SK-N-SH (cell line): ENCODE measurements at regions of chr10 and their contacts with region 1.

Region 1: DNA sequence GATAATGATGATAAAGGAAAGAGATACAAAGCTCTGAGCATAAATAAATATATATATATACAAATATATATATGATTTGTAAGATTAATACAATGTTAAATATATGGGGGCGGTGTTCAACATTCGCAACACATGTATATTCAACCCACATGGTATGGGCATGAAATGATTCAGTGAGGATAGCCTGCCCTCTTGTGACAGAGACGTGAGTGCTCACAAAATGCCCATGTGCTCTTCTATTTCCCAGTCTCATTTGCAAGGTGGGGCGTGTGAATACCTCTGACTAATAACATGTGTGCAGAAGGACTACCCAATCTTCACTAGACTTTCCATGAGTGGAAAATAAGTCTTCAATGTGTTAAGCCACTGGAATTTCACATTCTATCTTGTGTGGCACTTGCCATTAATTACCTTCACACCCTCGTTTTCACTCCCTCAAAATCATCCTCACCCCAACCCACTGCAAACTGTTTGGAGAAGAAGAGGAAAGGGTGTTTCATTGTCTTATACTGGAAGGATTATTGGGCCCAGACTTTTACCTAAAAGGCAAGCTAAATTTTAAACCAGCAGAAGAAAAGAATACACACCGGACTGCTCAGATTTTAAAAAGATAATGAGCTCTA is 26.9 kb downstream of the ASAH2 start:
- DNase-seq: peak; percentile 28
- H3K4me3 ChIP-seq: no peak overlapping the region; a peak in 1 of 4 replicates
- H3K27ac ChIP-seq: no peak overlapping the region
- H3K4me1 ChIP-seq: no peaks in the 10 kb centered on the region
- H3K27me3 ChIP-seq: peaks cover 11% of the 10 kb centered on the region; the same call in 1 of the 2 replicates
- CTCF ChIP-seq: peak; percentile 72
- EP300 ChIP-seq: no peak
- RAD21 ChIP-seq: peak; percentile 82

Region 2: DNA sequence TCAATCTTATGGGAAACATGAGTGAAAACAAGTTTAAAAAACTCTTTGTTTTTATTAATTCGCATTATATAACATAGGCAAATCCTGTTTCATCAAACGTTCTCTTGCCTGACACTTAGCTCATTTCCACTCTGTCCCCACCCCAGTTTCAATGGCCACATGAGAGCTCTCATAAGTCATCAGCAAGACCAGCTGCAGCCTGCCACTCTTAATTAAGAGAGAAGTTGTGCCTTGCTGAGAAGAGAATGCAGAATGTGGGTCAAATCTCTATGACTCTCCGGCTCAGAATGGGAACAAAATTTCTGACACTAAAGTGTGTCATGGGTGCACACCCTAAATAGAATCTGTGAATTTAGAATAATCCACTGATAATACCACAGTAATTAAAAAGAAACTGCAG is 12.8 kb before region 1 on chr10:
- CTCF ChIA-PET with region 1: interaction called, 14 read pairs
- POLR2A ChIA-PET with region 1: no interaction called
- DNase-seq: no peak
- H3K4me3 ChIP-seq: no peak overlapping the region
- H3K27ac ChIP-seq: no peak overlapping the region
- H3K4me1 ChIP-seq: peaks cover 0 to 2% of the 10 kb centered on the region in 2 experiments; a peak in 1 of 4 replicates
- H3K27me3 ChIP-seq: peaks cover 7% of the 10 kb centered on the region; the same call in 1 of the 2 replicates
- CTCF ChIP-seq: no peak
- EP300 ChIP-seq: no peak
- RAD21 ChIP-seq: no peak

Region 3: GRCh38 chr10:50234486-50234885 is 10.0 kb after region 1 on chr10:
- CTCF ChIA-PET with region 1: interaction called, 25 read pairs
- POLR2A ChIA-PET with region 1: no interaction called
- DNase-seq: no peak
- H3K4me3 ChIP-seq: no peak overlapping the region
- H3K27ac ChIP-seq: no peak overlapping the region
- H3K4me1 ChIP-seq: no peaks in the 10 kb centered on the region
- H3K27me3 ChIP-seq: peaks cover 14% of the 10 kb centered on the region
- CTCF ChIP-seq: no peak
- EP300 ChIP-seq: no peak
- RAD21 ChIP-seq: no peak